ENCODE measurements at regions of chr20 and their contacts with region 1.

Region 1: DNA sequence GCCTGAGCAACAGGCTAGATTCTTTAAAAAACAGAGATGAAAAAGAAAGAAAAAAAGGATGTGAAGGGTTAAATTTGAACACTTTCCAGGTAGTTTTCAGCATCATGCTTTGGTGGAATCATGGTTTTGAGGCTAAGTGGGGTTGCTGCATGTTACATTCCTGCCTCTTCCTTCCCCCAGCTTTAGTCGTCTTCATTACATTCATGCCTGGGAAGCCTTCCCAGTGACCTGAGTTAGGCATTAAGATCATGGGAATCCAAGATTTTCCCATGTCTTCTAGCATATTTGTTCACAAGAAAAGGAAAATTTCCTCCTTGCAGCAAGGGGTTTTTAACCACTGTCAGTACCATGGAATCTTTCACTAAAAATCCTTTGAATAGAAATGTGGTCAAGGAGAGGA is 12.0 kb downstream of the TPX2 start:
- DNase-seq: no peak
- ATAC-seq: no peak
- H3K4me3 ChIP-seq: no peak overlapping the region
- H3K27ac ChIP-seq: peak overlapping the region; percentile 30
- H3K4me1 ChIP-seq: peaks cover 30% of the 10 kb centered on the region
- H3K27me3 ChIP-seq: no peaks in the 10 kb centered on the region
- CTCF ChIP-seq: no peak

Region 2: DNA sequence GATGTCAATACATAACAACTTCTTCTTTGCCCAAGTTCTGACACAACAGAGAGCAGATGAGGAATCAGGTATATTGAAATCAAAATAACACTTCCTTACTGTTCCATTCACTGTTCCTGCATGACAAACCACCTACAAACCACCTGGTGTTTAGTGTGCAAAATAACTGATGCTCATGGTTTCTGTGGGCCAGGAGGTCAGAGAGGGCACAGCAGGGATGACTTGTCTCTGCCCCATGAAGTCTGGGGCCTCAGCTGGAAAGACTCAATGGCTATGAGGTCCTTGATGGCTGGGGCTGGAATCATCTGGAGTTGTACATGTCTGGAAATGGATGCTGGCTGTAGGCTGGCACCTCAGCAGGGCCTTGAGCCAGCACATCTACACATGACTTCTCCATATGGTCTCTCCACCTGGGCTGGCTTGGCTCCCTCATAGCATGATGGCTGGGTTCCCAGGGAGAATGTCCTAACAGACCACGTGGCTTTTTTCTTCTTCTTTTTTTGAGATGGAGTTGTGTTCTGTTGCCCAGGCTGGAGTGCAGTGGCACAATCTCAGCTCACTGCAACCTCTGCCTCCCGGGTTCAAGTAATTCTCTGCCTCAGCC is 120.8 kb before region 1 on chr20:
- intact Hi-C with region 1: no loop called
- DNase-seq: no peak
- ATAC-seq: no peak
- H3K4me3 ChIP-seq: no peak overlapping the region
- H3K27ac ChIP-seq: no peak overlapping the region
- H3K4me1 ChIP-seq: no peaks in the 10 kb centered on the region
- H3K27me3 ChIP-seq: no peaks in the 10 kb centered on the region
- CTCF ChIP-seq: no peak

Region 3: DNA sequence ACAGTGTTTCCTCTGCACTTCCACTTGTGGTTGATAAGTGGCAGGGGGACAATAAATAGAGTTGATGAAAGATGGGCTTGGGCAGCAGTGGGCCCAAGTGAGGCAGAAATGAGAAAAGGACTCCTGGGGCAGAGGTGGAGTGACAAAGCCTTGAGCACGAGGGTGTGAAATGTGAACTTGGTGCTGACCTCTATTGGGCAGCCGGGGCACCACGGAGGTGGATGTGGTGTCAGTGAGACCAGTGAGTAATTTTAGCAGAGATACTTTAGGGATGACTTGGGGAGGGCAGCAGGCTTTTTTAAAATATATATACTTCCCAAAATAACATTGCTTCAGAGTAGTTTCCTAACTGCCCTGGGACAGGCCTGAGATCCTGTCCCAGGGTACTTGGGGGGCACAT is 37.5 kb after region 1 on chr20:
- intact Hi-C with region 1: loop called in 1 of 2 experiments (anchors 1 kb)
- DNase-seq: peak; percentile 36 to 74
- ATAC-seq: peak; percentile 97 to 99 (median 98)
- H3K4me3 ChIP-seq: no peak overlapping the region
- H3K27ac ChIP-seq: peak overlapping the region; percentile 63
- H3K4me1 ChIP-seq: peaks cover 10% of the 10 kb centered on the region
- H3K27me3 ChIP-seq: no peaks in the 10 kb centered on the region
- CTCF ChIP-seq: no peak

Region 4: DNA sequence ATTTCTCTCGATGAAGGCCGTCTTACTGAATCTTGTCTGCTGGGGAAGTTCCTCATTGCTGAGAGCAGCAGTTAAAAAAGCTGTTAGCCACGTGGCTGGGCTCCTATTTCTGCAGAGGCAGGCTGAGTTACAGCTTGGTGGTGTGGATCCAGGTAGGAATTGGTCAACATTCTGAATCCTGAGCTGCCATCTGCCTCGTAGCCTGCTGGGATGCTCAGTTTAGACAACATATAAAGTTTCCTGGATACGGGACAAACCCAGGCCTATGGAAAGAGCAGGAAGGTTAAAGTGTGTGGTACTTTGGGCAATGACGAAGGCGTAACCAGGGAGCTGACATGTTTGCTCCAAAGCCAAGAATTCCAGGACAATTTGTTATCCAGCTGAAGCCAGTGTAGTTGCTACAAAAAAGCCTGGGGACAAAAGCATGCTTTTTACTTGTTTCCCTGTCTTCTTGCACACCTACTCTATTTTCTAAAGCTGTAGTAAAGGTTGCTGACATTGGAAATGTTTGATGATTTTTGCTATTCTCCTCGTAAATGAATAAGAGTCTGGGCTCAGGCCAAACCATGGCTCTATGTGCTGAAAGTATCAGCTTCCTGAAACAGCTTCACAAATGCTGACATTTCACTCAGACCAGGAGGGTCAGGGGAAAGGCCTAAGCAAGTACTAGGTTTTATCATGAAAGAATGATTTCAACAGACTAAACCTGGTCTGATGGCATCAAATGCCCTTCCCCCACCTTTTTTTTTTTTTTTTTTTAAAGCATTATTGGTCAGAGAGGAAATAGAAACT is 55.6 kb after region 1 on chr20:
- intact Hi-C with region 1: loop called in 1 of 2 experiments (anchors 5 kb)
- DNase-seq: peak in 1 of 2 donors; percentile 68
- ATAC-seq: peak; percentile 85 to 90 (median 88)
- H3K4me3 ChIP-seq: no peak overlapping the region
- H3K27ac ChIP-seq: peak overlapping the region; percentile 90
- H3K4me1 ChIP-seq: peaks cover 68% of the 10 kb centered on the region
- H3K27me3 ChIP-seq: no peaks in the 10 kb centered on the region
- CTCF ChIP-seq: no peak

Region 5: GRCh38 chr20:31815408-31816188 is 64.5 kb after region 1 on chr20:
- intact Hi-C with region 1: loop called in 1 of 2 experiments (anchors 5 kb)
- DNase-seq: peak in 1 of 2 donors; percentile 70
- ATAC-seq: peak; percentile 43 to 56 (median 52)
- H3K4me3 ChIP-seq: peak overlapping the region; percentile 45
- H3K27ac ChIP-seq: peak overlapping the region; percentile 90
- H3K4me1 ChIP-seq: peaks cover 63% of the 10 kb centered on the region
- H3K27me3 ChIP-seq: no peaks in the 10 kb centered on the region
- CTCF ChIP-seq: no peak

Measured in psoas muscle (tissue), 8 donors.